ENCODE measurements at regions of chr6 and their contacts with region 1.

Region 1: DNA sequence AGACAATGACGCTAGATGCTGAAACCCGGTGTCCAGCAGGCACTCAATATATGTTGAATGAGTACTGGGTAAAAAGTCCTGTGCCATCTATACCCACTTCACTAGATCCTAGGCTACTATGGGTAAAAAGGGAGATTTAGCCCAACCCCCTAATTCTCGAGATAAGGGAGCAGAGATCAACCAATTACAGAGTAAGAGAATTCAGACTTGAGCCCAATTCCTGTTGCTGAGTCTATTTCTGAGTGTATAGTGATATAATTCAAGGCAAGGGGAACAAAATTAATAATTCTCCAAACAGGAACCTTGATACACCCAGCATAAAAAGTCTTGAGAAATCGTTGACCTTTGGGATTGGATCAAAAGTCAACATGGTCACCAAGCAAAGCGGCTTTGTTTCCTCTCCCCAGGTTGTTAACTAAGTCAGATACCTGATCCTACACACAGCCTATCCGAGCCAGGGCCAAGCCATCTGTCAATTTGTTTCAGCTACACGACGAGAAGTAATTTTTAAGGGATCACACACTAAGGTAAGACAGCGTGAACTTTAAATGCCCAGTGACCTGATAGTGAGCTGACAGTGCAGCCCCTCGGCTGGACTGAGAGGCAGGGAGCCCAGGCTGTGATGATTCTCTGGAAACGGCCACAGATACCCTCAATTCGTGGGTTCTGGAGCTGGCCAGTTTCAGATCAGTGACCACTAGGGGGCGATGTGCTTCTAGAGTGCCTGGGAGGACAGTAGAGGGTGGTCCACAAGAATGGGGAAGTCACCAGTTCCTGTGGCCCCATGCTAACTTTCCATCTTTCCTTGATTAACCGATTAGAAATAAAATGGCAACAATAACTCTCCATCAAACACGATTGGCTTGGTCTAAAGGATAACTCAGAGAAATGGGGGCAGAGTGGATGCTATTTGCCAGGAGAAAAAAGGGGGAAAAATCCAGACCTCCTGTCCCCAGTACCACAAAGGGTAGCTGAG is 46.2 kb downstream of the SLC22A23 start:
- DNase-seq: peak; percentile 95
- ATAC-seq: peak; percentile 71
- H3K4me3 ChIP-seq: peak overlapping the region; percentile 21 to 61 (median 23)
- H3K27ac ChIP-seq: peak overlapping the region; percentile 93
- H3K4me1 ChIP-seq: peaks cover 100% of the 10 kb centered on the region
- H3K27me3 ChIP-seq: no peaks in the 10 kb centered on the region
- CTCF ChIP-seq: peak; percentile 99
- EP300 ChIP-seq: peak in 1 of 2 experiments; percentile 86; a peak in 2 of 4 replicates
- POLR2A ChIP-seq: no peak
- RAD21 ChIP-seq: peak; percentile 84

Region 2: GRCh38 chr6:3356056-3356761 is 54.5 kb before region 1 on chr6:
- CTCF ChIA-PET with region 1: interaction called, 4 read pairs
- POLR2A ChIA-PET with region 1: interaction called, 25 read pairs
- in situ Hi-C with region 1: no loop called
- intact Hi-C with region 1: loop called (anchors 1 kb)
- DNase-seq: peak; percentile 65
- ATAC-seq: peak; percentile 56
- H3K4me3 ChIP-seq: peak overlapping the region; percentile 12 to 47 (median 17); a peak in 5 of 6 replicates
- H3K27ac ChIP-seq: peak overlapping the region; percentile 98
- H3K4me1 ChIP-seq: peaks cover 89% of the 10 kb centered on the region
- H3K27me3 ChIP-seq: no peaks in the 10 kb centered on the region
- CTCF ChIP-seq: no peak
- EP300 ChIP-seq: no peak
- POLR2A ChIP-seq: peak in 1 of 2 experiments; percentile 42; a peak in 1 of 4 replicates
- RAD21 ChIP-seq: no peak

Region 3: GRCh38 chr6:3372007-3372846 is 38.4 kb before region 1 on chr6:
- CTCF ChIA-PET with region 1: no interaction called
- POLR2A ChIA-PET with region 1: interaction called, 271 read pairs
- in situ Hi-C with region 1: no loop called
- intact Hi-C with region 1: no loop called
- DNase-seq: no peak
- ATAC-seq: no peak
- H3K4me3 ChIP-seq: no peak overlapping the region
- H3K27ac ChIP-seq: peak overlapping the region; percentile 85
- H3K4me1 ChIP-seq: peaks cover 100% of the 10 kb centered on the region
- H3K27me3 ChIP-seq: no peaks in the 10 kb centered on the region
- CTCF ChIP-seq: peak; percentile 56
- EP300 ChIP-seq: no peak
- POLR2A ChIP-seq: no peak
- RAD21 ChIP-seq: peak; percentile 19; the same call in 1 of the 2 replicates

Region 4: GRCh38 chr6:3377536-3378397 is 32.9 kb before region 1 on chr6:
- CTCF ChIA-PET with region 1: no interaction called
- POLR2A ChIA-PET with region 1: interaction called, 271 read pairs
- in situ Hi-C with region 1: no loop called
- intact Hi-C with region 1: loop called (anchors 1 kb)
- DNase-seq: peak; percentile 79
- ATAC-seq: peak; percentile 11
- H3K4me3 ChIP-seq: no peak overlapping the region; a peak in 1 of 6 replicates
- H3K27ac ChIP-seq: peak overlapping the region; percentile 87
- H3K4me1 ChIP-seq: peaks cover 100% of the 10 kb centered on the region
- H3K27me3 ChIP-seq: no peaks in the 10 kb centered on the region
- CTCF ChIP-seq: no peak; the same call in 1 of the 2 replicates
- EP300 ChIP-seq: peak in 1 of 2 experiments; percentile 80; a peak in 2 of 4 replicates
- POLR2A ChIP-seq: 0 out of 4 replicates have a peak, but pooled peaks of 1 of the 2 experiments have one; percentile 2
- RAD21 ChIP-seq: no peak; the same call in 1 of the 2 replicates

Region 5: GRCh38 chr6:3383525-3383924 is 27.1 kb before region 1 on chr6:
- CTCF ChIA-PET with region 1: no interaction called
- POLR2A ChIA-PET with region 1: interaction called, 271 read pairs
- in situ Hi-C with region 1: no loop called
- intact Hi-C with region 1: loop called (anchors 1 kb)
- DNase-seq: peak; percentile 88
- ATAC-seq: no peak
- H3K4me3 ChIP-seq: no peak overlapping the region
- H3K27ac ChIP-seq: peak overlapping the region; percentile 95
- H3K4me1 ChIP-seq: peaks cover 80% of the 10 kb centered on the region
- H3K27me3 ChIP-seq: no peaks in the 10 kb centered on the region
- CTCF ChIP-seq: 0 out of 2 replicates have a peak, but pooled peaks have one; percentile 3
- EP300 ChIP-seq: peak in 1 of 2 experiments; percentile 81; a peak in 2 of 4 replicates
- POLR2A ChIP-seq: no peak
- RAD21 ChIP-seq: 0 out of 2 replicates have a peak, but pooled peaks have one; percentile 30

Region 6: DNA sequence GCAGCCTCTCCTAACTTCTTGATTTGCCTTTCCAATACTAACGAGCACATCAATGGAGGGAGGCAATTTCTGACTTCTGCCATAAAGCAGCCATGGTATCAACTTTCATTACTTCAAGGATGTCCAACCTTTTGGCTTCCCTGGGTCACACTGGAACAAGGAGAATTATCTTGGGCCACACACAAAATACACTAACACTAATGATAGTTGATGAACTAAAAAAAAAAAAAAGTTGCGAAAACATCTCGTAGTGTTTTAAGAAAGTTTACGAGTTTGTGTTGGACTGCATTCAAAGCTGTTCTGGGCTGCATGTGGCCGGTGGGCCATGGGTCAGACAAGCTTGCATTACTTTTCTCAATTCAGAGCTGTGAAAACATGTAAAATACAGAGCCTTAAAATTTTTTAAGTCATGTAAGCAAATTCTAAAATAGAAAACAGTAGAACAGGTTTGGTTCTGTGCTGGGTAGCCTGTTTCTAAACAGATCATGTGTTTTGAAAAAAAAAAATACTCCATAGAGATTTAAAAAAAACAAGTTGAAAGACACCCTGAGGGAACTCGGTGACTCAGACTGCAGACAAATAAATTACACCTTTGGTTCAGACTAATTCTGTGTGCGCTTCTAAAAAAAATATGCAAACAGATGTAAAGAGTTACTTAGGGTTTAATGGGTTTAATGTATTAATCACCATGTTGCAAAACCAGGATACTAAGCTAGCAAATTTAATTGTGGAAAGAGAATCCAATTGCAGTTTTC is 89.8 kb after region 1 on chr6:
- CTCF ChIA-PET with region 1: no interaction called
- POLR2A ChIA-PET with region 1: interaction called, 3 read pairs
- in situ Hi-C with region 1: loop called (anchors 5 kb)
- intact Hi-C with region 1: loop called (anchors 10 kb)
- DNase-seq: peak; percentile 42
- ATAC-seq: no peak
- H3K4me3 ChIP-seq: no peak overlapping the region
- H3K27ac ChIP-seq: no peak overlapping the region
- H3K4me1 ChIP-seq: peaks cover 62% of the 10 kb centered on the region
- H3K27me3 ChIP-seq: no peaks in the 10 kb centered on the region
- CTCF ChIP-seq: no peak
- EP300 ChIP-seq: no peak; a peak in 1 of 4 replicates
- POLR2A ChIP-seq: no peak
- RAD21 ChIP-seq: no peak

Region 7: GRCh38 chr6:3732345-3733141 is 321.9 kb after region 1 on chr6:
- CTCF ChIA-PET with region 1: interaction called, 7 read pairs
- POLR2A ChIA-PET with region 1: no interaction called
- in situ Hi-C with region 1: no loop called
- intact Hi-C with region 1: loop called (anchors 5 kb)
- DNase-seq: peak; percentile 64
- ATAC-seq: peak; percentile 93
- H3K4me3 ChIP-seq: no peak overlapping the region
- H3K27ac ChIP-seq: no peak overlapping the region
- H3K4me1 ChIP-seq: no peaks in the 10 kb centered on the region
- H3K27me3 ChIP-seq: no peaks in the 10 kb centered on the region
- CTCF ChIP-seq: peak; percentile 99
- EP300 ChIP-seq: no peak
- POLR2A ChIP-seq: no peak
- RAD21 ChIP-seq: peak; percentile 96